T-cell (primary cell): ENCODE measurements at regions of chr14 and their contacts with region 1.

Region 1: DNA sequence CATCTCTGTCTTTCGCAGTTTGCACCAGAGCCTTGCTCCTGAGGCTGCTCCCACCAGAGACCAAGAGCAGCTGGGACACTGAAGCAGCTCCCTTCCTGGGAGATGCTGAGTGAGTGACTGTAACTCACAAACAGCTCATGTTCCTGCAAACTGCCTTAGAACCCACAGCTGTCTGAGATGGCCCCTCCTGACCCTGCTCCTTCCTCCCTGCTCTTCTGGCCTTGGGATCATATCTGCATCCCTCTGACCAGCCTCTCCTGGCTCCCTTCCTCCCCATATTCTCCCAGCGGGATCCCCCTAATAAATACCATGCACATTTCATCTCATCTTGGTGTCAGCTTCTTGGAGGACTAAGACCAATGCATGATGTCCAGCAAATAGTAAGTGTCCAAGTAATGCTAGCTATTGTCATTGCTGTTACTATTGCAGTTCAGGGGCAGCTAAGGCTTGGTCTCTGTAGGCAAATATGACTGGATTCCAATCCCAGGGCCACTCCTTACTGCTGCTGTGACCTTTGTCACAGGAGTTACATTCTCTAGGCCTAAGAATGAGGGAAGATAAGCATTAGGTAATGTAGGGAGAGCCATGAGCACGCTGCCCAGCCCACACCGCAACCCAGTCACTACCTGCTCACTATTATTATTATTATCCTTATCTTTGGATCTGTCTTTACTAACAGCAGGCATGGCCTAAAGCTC is 47.9 kb downstream of the SYNE3 start:
- DNase-seq: no peak
- ATAC-seq: no peak
- H3K4me3 ChIP-seq: no peak overlapping the region
- H3K4me3 Mint-ChIP-seq: no peak overlapping the region
- H3K27ac ChIP-seq: no peak overlapping the region
- H3K27ac Mint-ChIP-seq: peak overlapping the region; percentile 76 to 97
- H3K4me1 ChIP-seq: peaks cover 23 to 52% of the 10 kb centered on the region in 2 experiments
- H3K4me1 Mint-ChIP-seq: peaks cover 52 to 64% (median 63%) of the 10 kb centered on the region in 3 donors
- H3K27me3 ChIP-seq: no peaks in the 10 kb centered on the region
- H3K27me3 Mint-ChIP-seq: no peaks in the 10 kb centered on the region

Region 2: GRCh38 chr14:95479494-95479893 is 10.9 kb after region 1 on chr14:
- CTCF ChIA-PET with region 1: interaction called in 1 of 2 experiments, 10 read pairs
- POLR2A ChIA-PET with region 1: interaction called in 1 of 2 experiments, 4 read pairs
- DNase-seq: no peak
- ATAC-seq: no peak
- H3K4me3 ChIP-seq: no peak overlapping the region
- H3K4me3 Mint-ChIP-seq: peak overlapping the region in 1 of 3 donors; percentile 37
- H3K27ac ChIP-seq: no peak overlapping the region
- H3K27ac Mint-ChIP-seq: peak overlapping the region; percentile 65 to 94
- H3K4me1 ChIP-seq: peaks cover 0 to 50% of the 10 kb centered on the region in 2 experiments
- H3K4me1 Mint-ChIP-seq: peaks cover 54 to 57% (median 54%) of the 10 kb centered on the region in 3 donors
- H3K27me3 ChIP-seq: no peaks in the 10 kb centered on the region
- H3K27me3 Mint-ChIP-seq: no peaks in the 10 kb centered on the region